ENCODE measurements at regions of chr2 and their contacts with region 1.

Region 1: DNA sequence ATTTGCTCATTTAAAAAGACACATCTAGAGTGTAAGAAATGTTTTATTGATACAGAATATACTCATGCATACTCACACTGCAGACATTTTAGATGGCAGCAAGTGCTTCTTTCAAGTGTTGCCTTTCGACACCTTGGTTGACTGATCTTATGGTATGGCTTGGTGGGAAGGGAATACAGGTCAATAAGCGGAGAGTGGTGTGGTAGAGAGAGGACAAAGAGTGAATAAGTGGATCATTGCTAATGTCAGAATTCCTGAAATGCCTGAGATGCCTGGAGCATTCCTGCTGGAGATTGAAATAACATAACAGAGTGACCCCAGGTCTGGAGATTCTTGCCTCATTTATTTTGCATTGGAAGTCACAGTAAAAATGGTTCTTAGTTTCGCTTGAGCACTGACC is 76.7 kb downstream of the RND3 start:
- DNase-seq: no peak
- ATAC-seq: peak; percentile 79
- H3K4me3 ChIP-seq: no peak overlapping the region
- H3K27ac ChIP-seq: no peak overlapping the region
- H3K4me1 ChIP-seq: peaks cover 3% of the 10 kb centered on the region; the same call in 1 of the 2 replicates
- H3K27me3 ChIP-seq: no peaks in the 10 kb centered on the region
- CTCF ChIP-seq: no peak

Region 2: DNA sequence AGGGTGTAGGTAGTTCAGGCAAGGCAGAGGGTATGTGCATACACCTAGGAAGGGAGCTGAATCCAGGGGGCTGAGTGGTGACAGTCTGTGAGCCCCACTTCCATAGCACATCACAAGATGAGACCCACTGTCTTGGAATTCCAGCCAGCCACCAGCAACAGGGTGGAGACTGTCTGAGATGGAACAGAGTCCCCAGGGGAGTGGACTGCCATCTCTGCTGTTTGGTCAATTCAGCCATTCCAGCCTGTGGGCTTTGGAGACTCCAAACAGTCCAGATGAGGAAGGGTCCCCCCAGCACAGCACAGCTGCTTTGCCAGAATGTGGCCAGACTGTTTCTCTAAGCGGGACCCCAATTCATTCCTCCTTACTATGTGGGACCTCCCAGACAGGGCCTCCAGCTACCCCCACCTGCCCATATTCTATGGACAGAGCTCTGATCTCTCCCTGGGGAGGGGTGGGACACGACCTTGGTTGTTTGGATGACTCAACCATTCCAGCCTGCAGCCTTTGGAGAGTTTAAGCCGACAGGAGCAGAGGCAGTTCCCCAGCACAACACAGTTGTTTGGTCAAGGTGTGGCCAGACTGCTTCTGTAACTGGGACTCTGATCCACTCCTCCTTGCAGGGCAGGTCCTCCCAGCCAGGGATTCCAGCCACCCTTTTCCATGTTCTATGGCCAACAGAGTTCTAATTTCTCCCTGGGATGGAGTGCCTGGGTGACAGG is 101.3 kb before region 1 on chr2:
- CTCF ChIA-PET with region 1: interaction called, 14 read pairs
- POLR2A ChIA-PET with region 1: no interaction called
- in situ Hi-C with region 1: no loop called
- intact Hi-C with region 1: no loop called
- DNase-seq: no peak
- ATAC-seq: no peak
- H3K4me3 ChIP-seq: no peak overlapping the region
- H3K27ac ChIP-seq: no peak overlapping the region
- H3K4me1 ChIP-seq: no peaks in the 10 kb centered on the region
- H3K27me3 ChIP-seq: no peaks in the 10 kb centered on the region
- CTCF ChIP-seq: no peak

Measured in Panc1 (cell line).